HAP-1 (cell line): ENCODE measurements at regions of chr3 and their contacts with region 1.

Region 1: DNA sequence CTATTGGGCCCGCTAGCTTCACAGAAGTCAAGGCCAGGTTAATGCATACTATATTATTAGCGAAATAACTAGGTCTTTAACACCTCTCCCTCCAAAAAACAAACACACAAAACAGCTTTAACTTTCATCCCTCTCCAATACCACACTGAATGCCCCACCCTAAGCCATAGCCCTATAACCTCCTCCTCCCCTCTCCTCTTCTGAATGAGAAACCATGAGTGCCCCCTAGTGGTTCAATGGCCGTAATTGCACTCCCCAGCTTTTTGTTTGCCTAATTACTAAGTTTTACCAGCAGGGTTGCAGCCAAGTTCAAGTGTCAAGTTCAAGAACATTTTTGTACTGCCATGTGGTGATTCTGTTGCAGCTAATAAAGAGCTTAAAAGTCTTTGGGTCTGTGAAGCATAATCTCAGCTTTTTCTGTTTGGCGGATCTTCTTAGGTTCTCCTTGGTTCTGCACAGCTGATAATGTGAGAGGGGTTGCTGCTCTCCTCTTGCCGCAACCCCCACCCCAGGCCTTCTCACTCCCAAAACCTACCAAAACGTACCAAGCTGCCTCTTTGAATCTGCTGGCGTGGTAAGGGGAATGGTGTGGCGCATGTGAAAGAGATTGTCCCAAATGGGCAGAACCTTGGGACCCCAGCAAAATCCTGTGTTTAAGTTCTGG is 57.9 kb downstream of the RPL22L1 start:
- DNase-seq: peak; percentile 85 to 90
- H3K4me3 ChIP-seq: no peak overlapping the region
- H3K4me1 ChIP-seq: peaks cover 14% of the 10 kb centered on the region
- H3K27me3 ChIP-seq: no peaks in the 10 kb centered on the region

Region 2: GRCh38 chr3:170307671-170308403 is 504.2 kb before region 1 on chr3:
- in situ Hi-C with region 1: loop called (anchors 25 kb)
- DNase-seq: peak; percentile 48 to 50
- H3K4me3 ChIP-seq: no peak overlapping the region
- H3K4me1 ChIP-seq: peaks cover 9% of the 10 kb centered on the region
- H3K27me3 ChIP-seq: no peaks in the 10 kb centered on the region

Region 3: GRCh38 chr3:170414202-170414663 is 397.8 kb before region 1 on chr3:
- in situ Hi-C with region 1: loop called (anchors 10 kb)
- DNase-seq: peak; percentile 71 to 85
- H3K4me3 ChIP-seq: no peak overlapping the region
- H3K4me1 ChIP-seq: peaks cover 6% of the 10 kb centered on the region
- H3K27me3 ChIP-seq: no peaks in the 10 kb centered on the region

Region 4: DNA sequence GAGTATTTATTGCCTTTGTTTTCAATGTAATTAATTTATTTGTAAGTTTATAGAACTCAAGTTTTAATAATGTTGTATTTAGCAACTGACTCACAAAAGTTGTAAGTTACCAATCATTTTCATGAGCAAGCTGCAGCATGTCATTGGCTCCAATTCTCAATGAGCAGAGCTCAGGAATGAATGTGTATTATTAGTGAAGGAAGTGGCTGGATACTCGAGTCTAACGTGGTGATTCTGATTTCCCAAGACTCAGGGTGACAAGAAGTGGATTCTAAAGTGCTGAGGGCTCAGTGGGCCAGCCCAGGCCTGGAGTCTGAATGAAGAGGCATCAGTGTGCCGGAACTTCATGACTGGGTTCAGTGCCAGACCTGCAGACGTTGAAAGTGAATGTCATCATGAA is 353.8 kb before region 1 on chr3:
- in situ Hi-C with region 1: no loop called
- DNase-seq: no peak
- H3K4me3 ChIP-seq: no peak overlapping the region
- H3K4me1 ChIP-seq: peaks cover 7% of the 10 kb centered on the region
- H3K27me3 ChIP-seq: no peaks in the 10 kb centered on the region

Region 5: GRCh38 chr3:170889132-170889531 is 77.1 kb after region 1 on chr3:
- in situ Hi-C with region 1: no loop called
- DNase-seq: no peak
- H3K4me3 ChIP-seq: no peak overlapping the region
- H3K4me1 ChIP-seq: no peaks in the 10 kb centered on the region; the same call in 1 of the 2 replicates
- H3K27me3 ChIP-seq: no peaks in the 10 kb centered on the region

Region 6: DNA sequence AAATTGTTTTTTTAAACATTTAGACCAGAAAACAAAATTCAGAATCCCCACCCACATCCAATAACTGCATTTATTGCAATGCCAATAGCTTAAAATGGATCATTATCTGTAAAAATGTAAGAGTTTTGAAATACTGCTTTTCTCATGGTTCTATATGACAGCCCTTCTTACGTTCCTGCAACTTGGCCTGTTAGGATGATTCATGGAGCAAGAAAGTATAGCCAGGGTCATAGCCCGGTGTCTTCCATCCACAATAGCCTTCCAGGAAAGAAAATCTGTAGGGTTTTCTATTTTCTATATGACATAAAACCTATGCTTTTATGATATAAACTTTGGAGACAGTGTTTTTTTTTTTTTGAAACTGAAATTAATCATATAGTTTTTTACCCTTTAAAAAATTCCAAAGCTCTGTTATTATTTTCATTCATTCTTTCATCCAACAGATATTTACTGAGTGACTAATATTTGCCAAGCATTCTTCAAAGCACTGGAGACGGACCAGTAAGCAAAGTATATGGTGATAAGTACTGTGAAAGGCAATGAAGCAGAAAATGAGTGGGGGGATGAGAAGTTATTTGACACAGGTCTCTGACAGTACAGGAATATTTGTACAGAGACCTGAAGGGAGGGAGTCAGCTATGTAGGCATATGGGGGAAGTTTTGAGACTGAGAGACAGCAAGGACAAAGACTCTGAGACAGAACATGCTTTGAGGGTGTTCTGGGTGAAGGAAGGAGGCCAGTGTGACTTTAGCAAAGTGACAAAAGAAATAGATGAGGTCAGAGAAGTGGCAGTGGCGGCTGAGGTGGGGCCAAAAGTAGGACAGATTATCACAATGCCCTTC is 243.5 kb after region 1 on chr3:
- in situ Hi-C with region 1: no loop called
- DNase-seq: no peak
- H3K4me3 ChIP-seq: no peak overlapping the region
- H3K4me1 ChIP-seq: no peaks in the 10 kb centered on the region; the same call in 1 of the 2 replicates
- H3K27me3 ChIP-seq: no peaks in the 10 kb centered on the region; the same call in 1 of the 2 replicates